HepG2 (cell line): ENCODE measurements at regions of chr5 and their contacts with region 1.

Region 1: GRCh38 chr5:174735498-174736330 is 11.3 kb downstream of the MSX2 start:
- DNase-seq: peak; percentile 5
- ATAC-seq: peak; percentile 65
- H3K4me3 ChIP-seq: no peak overlapping the region
- H3K27ac ChIP-seq: no peak overlapping the region
- H3K4me1 ChIP-seq: no peaks in the 10 kb centered on the region
- H3K27me3 ChIP-seq: peaks cover 4 to 51% of the 10 kb centered on the region in 2 experiments
- CTCF ChIP-seq: peak; percentile 60
- EP300 ChIP-seq: no peak
- POLR2A ChIP-seq: no peak
- RAD21 ChIP-seq: peak; percentile 42; the same call in 1 of the 2 replicates

Region 2: GRCh38 chr5:174327317-174328236 is 408.1 kb before region 1 on chr5:
- CTCF ChIA-PET with region 1: interaction called, 3 read pairs
- POLR2A ChIA-PET with region 1: no interaction called
- in situ Hi-C with region 1: loop called (anchors 10 kb)
- intact Hi-C with region 1: no loop called
- DNase-seq: peak; percentile 42
- ATAC-seq: peak; percentile 89
- H3K4me3 ChIP-seq: no peak overlapping the region
- H3K27ac ChIP-seq: no peak overlapping the region
- H3K4me1 ChIP-seq: no peaks in the 10 kb centered on the region
- H3K27me3 ChIP-seq: no peaks in the 10 kb centered on the region; a peak in 2 of 5 replicates
- CTCF ChIP-seq: peak; percentile 68
- EP300 ChIP-seq: no peak
- POLR2A ChIP-seq: no peak
- RAD21 ChIP-seq: no peak

Region 3: DNA sequence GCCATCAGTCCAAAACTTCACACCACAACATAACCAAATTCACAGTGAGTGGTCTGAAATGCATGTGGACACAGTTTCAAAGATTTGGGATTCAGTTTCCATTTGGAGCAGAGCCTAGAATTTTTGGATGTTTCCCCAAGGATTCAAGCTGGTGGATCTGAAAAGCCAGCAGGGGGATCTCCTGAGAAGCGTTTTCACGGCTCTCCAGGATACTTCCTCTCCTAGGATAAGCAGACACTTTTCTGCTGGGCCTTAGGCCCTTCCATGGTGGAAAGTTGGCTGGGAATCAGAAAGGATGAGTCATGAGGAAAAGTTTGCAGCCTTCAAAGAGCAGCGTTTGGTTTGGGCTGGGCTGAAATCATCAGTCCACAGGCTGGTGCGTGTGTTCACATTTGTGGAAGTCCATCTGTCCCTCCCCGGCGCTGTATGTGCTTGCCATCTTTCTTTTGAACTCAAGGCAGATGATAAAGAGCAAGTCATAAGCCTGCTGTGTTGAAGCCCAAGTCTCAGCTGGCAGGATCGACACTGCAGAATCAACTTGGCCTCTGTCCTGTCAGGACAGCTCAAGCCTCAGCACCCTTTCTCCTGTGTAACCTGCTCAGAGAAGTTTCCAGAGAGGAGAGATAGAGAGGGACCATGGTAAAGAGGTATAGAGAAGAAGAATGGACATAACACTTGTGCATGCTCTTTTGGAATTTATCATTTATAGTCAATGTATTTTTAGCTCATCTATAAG is 163.9 kb before region 1 on chr5:
- CTCF ChIA-PET with region 1: no interaction called
- POLR2A ChIA-PET with region 1: no interaction called
- in situ Hi-C with region 1: loop called (anchors 10 kb)
- intact Hi-C with region 1: no loop called
- DNase-seq: peak; percentile 28
- ATAC-seq: no peak
- H3K4me3 ChIP-seq: no peak overlapping the region
- H3K27ac ChIP-seq: no peak overlapping the region
- H3K4me1 ChIP-seq: no peaks in the 10 kb centered on the region
- H3K27me3 ChIP-seq: no peaks in the 10 kb centered on the region; a peak in 1 of 5 replicates
- CTCF ChIP-seq: no peak
- EP300 ChIP-seq: no peak
- POLR2A ChIP-seq: no peak
- RAD21 ChIP-seq: no peak

Region 4: GRCh38 chr5:174720612-174721451 is 14.9 kb before region 1 on chr5:
- CTCF ChIA-PET with region 1: no interaction called
- POLR2A ChIA-PET with region 1: no interaction called
- in situ Hi-C with region 1: no loop called
- intact Hi-C with region 1: no loop called
- DNase-seq: peak; percentile 2
- ATAC-seq: peak; percentile 67; the same call in 2 of the 3 replicates
- H3K4me3 ChIP-seq: no peak overlapping the region; a peak in 1 of 6 replicates
- H3K27ac ChIP-seq: no peak overlapping the region
- H3K4me1 ChIP-seq: no peaks in the 10 kb centered on the region; the same call in 1 of the 2 replicates
- H3K27me3 ChIP-seq: peaks cover 17 to 56% of the 10 kb centered on the region in 2 experiments
- CTCF ChIP-seq: no peak
- EP300 ChIP-seq: no peak
- POLR2A ChIP-seq: no peak
- RAD21 ChIP-seq: no peak